ENCODE measurements at regions of chrX and their contacts with region 1.

Region 1: DNA sequence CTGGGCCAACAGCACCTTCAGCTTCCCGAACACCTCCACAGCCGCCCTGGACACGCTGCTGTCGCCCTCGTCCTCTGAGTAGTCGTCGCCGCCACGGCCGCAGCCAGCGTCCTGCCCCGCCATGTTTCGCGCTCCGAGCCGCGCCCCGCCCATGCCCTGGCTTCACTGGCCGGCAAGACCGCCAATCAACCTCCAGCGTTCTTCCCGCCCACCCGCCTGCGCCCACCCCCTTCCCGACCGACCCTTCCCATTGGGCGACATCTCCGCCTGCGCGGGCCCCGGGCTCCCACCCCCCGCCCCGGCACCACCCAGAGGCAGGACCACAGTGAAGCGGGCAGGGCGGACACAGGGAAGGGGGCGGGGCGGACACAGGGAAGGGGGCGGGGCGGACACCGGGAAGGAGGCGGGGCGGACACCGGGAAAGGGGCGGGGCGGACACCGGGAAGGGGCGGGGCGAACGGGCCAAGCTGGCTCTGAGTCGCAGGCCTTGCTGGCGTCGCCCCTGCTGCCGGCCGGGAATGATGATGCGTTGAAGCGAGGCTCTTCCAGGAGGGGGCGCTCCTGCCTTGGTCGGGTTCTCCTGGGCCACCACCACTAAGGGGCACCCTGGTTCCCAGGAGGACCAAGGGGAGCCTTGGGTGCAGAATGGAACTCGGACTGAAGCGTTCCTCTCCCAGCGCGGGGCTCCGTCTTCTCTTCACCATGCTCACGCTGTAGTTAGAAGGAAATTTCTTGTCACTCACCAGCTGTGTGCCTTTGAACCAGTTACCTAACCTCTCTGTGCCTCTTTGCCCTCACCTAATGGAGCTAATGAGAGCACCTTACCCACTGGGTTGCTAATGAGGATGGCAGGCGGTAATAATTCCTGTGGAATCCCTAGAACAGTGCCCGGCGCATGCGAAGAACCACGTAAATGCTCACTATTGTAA is at the start of gene HAUS7:
- DNase-seq: peak; percentile 90
- H3K4me3 ChIP-seq: peak within 1 kb of the TSS; percentile 54
- H3K4me3 Mint-ChIP-seq: peak within 1 kb of the TSS; percentile 75
- H3K27ac Mint-ChIP-seq: no peak within 1 kb of the TSS
- H3K4me1 ChIP-seq: peaks cover 22% of the 10 kb centered on the region
- H3K4me1 Mint-ChIP-seq: no peaks in the 10 kb centered on the region
- H3K27me3 ChIP-seq: no peaks in the 10 kb centered on the region
- H3K27me3 Mint-ChIP-seq: no peaks in the 10 kb centered on the region
- CTCF ChIP-seq: peak; percentile 62 to 81
- total RNA-seq, gene HAUS7: 34.0 and 36.9 TPM in 2 replicates

Region 2: DNA sequence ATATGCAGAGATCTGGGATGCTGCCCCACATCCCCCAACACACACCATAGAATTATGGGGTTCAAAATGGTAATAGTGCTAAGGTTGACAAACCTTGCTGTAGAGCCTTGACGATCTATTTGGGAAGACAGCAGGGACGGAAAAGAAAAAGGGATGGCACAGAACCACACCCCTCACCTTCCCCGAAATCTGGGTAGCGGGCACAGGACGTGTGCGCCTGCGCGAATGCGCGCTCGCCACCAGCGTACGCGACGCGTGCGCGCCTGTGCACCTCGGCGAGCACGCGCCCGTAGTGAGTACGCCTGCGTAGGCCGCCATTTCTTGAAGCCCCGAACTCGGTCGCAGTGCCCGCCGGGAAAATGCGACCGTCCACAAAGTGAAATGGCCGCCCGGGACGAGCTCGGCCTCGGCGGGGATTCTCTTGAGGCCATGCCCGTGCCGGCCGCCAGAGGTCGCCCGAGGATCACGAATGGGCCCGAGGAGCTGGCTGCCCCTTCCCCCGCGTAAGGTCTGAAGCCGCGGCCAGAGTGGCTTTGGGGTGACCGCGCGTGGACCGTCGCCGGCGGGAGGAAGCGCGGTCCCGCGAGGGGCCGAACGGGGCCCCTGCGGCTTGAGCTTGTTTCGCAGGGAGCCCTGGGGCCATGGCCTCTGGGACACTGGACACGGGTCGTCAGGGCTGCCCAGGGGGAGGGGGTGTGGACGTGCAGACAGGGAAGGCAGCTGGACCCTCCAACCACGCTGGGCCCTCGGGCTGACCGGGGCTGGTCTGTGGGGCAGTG is 529.2 kb before region 1 on chrX:
- CTCF ChIA-PET with region 1: no interaction called
- POLR2A ChIA-PET with region 1: no interaction called
- intact Hi-C with region 1: loop called (anchors 1 kb)
- DNase-seq: peak; percentile 87 to 92
- H3K4me3 ChIP-seq: peak overlapping the region; percentile 54
- H3K4me3 Mint-ChIP-seq: peak overlapping the region; percentile 86
- H3K27ac Mint-ChIP-seq: no peak overlapping the region
- H3K4me1 ChIP-seq: no peaks in the 10 kb centered on the region
- H3K4me1 Mint-ChIP-seq: no peaks in the 10 kb centered on the region
- H3K27me3 ChIP-seq: no peaks in the 10 kb centered on the region
- H3K27me3 Mint-ChIP-seq: no peaks in the 10 kb centered on the region
- CTCF ChIP-seq: peak; percentile 75 to 77

Region 3: DNA sequence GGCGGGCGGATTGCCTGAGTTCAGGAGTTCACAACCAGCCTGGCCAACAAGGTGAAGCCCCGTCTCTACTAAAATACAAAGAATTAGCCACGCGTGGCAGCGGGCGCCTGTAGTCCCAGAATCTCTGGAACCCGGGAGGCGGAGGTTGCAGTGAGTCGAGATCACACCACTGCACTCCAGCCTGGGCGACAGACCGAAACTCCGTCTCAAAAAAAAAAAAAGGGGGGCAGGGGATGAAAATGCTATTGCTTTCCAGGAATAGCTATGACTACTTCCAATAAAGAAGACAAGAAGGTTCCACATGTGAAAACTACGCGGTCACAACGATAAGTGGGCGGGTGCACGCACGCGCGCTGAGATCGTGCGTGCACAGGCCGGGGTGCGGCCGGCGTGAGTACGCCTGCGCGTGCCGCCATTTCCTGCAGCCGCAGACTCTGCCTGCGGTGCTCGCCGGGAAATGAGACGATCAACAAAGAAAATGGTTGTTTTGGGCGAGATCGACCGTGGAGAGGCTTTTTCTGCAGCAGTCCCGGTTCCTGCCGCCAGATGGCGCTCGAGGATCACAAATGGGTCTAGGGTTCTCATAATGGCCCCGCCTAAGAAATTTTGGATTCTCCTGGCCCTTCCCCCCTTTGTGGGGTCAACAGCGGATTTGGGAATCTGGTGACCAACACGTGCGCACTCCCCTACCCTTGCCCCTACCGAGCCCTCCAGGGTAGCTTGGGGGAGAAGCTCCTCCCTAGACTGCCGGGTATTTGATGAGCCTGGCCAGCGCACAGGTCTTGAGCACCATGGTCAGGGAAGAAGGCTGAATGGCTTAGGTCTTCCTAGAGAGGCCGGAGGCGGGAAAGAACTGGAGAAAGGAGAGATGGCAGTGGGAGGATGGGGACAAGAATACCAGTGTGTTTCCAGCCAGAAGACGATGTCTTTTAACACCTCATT is 511.9 kb before region 1 on chrX:
- CTCF ChIA-PET with region 1: no interaction called
- POLR2A ChIA-PET with region 1: no interaction called
- intact Hi-C with region 1: loop called (anchors 2 kb)
- DNase-seq: peak; percentile 83 to 87
- H3K4me3 ChIP-seq: peak overlapping the region; percentile 45
- H3K4me3 Mint-ChIP-seq: peak overlapping the region; percentile 77
- H3K27ac Mint-ChIP-seq: peak overlapping the region; percentile 92
- H3K4me1 ChIP-seq: no peaks in the 10 kb centered on the region
- H3K4me1 Mint-ChIP-seq: no peaks in the 10 kb centered on the region
- H3K27me3 ChIP-seq: no peaks in the 10 kb centered on the region
- H3K27me3 Mint-ChIP-seq: no peaks in the 10 kb centered on the region
- CTCF ChIP-seq: peak; percentile 70 to 74

Region 4: GRCh38 chrX:153488231-153488914 is 17.7 kb after region 1 on chrX:
- CTCF ChIA-PET with region 1: interaction called, 14 read pairs
- POLR2A ChIA-PET with region 1: interaction called, 6 read pairs
- intact Hi-C with region 1: loop called (anchors 1 kb)
- DNase-seq: peak; percentile 72 to 87
- H3K4me3 ChIP-seq: no peak overlapping the region
- H3K4me3 Mint-ChIP-seq: peak overlapping the region; percentile 47
- H3K27ac Mint-ChIP-seq: peak overlapping the region; percentile 45
- H3K4me1 ChIP-seq: peaks cover 35% of the 10 kb centered on the region
- H3K4me1 Mint-ChIP-seq: no peaks in the 10 kb centered on the region
- H3K27me3 ChIP-seq: no peaks in the 10 kb centered on the region
- H3K27me3 Mint-ChIP-seq: no peaks in the 10 kb centered on the region
- CTCF ChIP-seq: no peak

Region 5: DNA sequence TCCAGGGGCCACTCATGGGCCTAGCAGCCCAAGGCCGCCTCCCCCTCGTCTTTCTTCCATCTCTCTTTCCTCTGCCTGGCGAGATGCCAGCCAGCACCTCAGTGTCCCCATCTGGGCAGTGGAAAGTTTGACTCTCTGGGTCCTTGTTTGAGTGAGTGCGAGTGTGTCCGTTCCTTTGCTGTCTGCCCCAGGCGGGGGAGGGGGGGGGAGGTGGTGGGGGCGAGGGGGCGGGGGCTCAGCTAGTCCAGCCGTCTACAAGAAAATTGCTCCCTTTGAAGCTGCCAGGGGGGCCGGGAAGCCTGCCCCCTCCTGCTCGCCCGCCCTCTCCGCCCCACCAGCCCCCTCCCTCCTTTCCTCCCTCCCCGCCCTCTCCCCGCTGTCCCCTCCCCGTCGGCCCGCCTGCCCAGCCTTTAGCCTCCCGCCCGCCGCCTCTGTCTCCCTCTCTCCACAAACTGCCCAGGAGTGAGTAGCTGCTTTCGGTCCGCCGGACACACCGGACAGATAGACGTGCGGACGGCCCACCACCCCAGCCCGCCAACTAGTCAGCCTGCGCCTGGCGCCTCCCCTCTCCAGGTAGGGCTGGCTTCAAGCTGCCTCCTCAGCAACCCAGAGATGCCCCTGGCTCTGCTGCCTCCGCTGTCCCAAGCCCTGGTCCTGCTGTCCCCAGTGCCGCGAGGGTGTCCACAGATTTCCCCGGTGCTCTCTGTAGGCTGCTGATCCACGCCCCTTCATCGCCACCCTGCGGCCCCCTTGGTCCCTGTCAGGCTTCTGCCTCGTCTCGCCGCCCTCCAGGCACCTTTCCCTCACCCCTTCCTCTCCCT is 24.1 kb after region 1 on chrX and contains the start of gene BGN:
- CTCF ChIA-PET with region 1: interaction called, 16 read pairs
- POLR2A ChIA-PET with region 1: interaction called, 6 read pairs
- intact Hi-C with region 1: loop called (anchors 1 kb)
- DNase-seq: peak; percentile 71 to 73
- H3K4me3 ChIP-seq: peak within 1 kb of the TSS; percentile 27
- H3K4me3 Mint-ChIP-seq: peak within 1 kb of the TSS; percentile 45
- H3K27ac Mint-ChIP-seq: peak within 1 kb of the TSS; percentile 27
- H3K4me1 ChIP-seq: peaks cover 9% of the 10 kb centered on the region
- H3K4me1 Mint-ChIP-seq: no peaks in the 10 kb centered on the region
- H3K27me3 ChIP-seq: no peaks in the 10 kb centered on the region
- H3K27me3 Mint-ChIP-seq: no peaks in the 10 kb centered on the region
- CTCF ChIP-seq: peak in 1 of 2 experiments; percentile 36
- total RNA-seq, gene BGN: 9.0 and 9.9 TPM in 2 replicates

Region 6: DNA sequence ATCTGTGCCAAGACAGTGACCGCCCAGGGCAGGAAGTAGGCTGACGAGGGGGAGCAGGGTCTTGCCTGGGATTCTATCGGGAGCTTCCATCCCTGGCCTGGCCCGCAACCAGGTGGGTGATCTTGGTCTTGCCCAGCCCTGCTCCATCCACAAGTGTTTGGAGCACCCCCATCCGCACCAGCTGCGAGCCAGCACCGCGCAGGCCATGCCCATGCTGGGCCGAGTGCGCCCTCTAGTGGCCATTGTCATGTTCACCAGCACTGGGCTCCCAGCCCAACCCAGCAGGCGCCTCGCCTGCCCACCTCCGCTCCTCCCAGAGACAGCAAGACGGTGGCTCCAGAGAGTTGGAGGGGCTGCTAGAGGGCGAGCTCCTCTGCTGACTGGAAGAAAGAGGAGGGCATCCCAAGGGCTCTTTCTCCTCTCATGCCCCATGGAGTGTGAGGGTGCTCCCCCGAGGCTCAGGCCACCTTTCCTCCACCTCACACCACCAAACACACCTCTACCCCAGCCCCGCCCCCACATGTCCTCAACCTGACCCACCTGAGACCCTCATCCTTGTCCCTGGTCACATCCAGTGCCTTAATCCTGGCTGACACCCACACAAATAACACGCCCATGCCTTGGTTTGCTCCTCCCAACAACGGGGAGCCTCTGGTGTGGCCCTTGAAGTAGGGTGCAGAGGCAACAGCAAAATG is 36.9 kb after region 1 on chrX:
- CTCF ChIA-PET with region 1: interaction called, 6 read pairs
- POLR2A ChIA-PET with region 1: no interaction called
- intact Hi-C with region 1: loop called (anchors 1 kb)
- DNase-seq: peak; percentile 65 to 82
- H3K4me3 ChIP-seq: no peak overlapping the region
- H3K4me3 Mint-ChIP-seq: no peak overlapping the region
- H3K27ac Mint-ChIP-seq: no peak overlapping the region
- H3K4me1 ChIP-seq: no peaks in the 10 kb centered on the region
- H3K4me1 Mint-ChIP-seq: no peaks in the 10 kb centered on the region
- H3K27me3 ChIP-seq: no peaks in the 10 kb centered on the region
- H3K27me3 Mint-ChIP-seq: peaks cover 3% of the 10 kb centered on the region
- CTCF ChIP-seq: peak; percentile 68 to 78

Region 7: DNA sequence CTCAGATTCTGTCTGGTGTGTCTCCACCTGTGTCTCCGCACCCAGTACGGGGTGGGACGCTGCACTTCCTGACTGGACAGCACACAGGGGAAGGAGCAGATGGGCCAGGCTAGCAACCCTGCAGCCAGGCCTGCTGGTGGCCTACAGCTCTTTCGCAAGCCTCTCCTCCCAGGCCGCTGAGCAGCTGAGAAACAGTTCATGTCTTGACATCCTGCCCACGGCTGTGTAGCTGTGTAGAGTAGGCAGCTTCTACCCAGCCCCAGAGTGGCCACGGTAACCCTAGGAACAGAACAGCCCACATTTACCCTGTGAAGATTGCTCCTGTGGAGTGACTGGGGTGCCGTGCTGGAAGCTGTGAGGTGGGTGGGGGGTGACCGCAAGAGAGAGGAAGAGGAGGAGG is 89.3 kb after region 1 on chrX:
- CTCF ChIA-PET with region 1: no interaction called
- POLR2A ChIA-PET with region 1: no interaction called
- intact Hi-C with region 1: no loop called
- DNase-seq: no peak
- H3K4me3 ChIP-seq: no peak overlapping the region
- H3K4me3 Mint-ChIP-seq: no peak overlapping the region
- H3K27ac Mint-ChIP-seq: no peak overlapping the region
- H3K4me1 ChIP-seq: no peaks in the 10 kb centered on the region
- H3K4me1 Mint-ChIP-seq: no peaks in the 10 kb centered on the region
- H3K27me3 ChIP-seq: no peaks in the 10 kb centered on the region
- H3K27me3 Mint-ChIP-seq: peaks cover 2% of the 10 kb centered on the region
- CTCF ChIP-seq: no peak

Region 8: GRCh38 chrX:153897899-153898298 is 427.2 kb after region 1 on chrX:
- CTCF ChIA-PET with region 1: no interaction called
- POLR2A ChIA-PET with region 1: no interaction called
- intact Hi-C with region 1: loop called (anchors 5 kb)
- DNase-seq: no peak
- H3K4me3 ChIP-seq: no peak overlapping the region
- H3K4me3 Mint-ChIP-seq: no peak overlapping the region
- H3K27ac Mint-ChIP-seq: no peak overlapping the region
- H3K4me1 ChIP-seq: no peaks in the 10 kb centered on the region
- H3K4me1 Mint-ChIP-seq: no peaks in the 10 kb centered on the region
- H3K27me3 ChIP-seq: no peaks in the 10 kb centered on the region
- H3K27me3 Mint-ChIP-seq: no peaks in the 10 kb centered on the region
- CTCF ChIP-seq: no peak

Measured in Caco-2 (cell line).